Caco-2 (cell line): ENCODE measurements at regions of chr10 and their contacts with region 1.

Region 1: GRCh38 chr10:17387861-17388508 is 66.4 kb downstream of the ST8SIA6 start:
- DNase-seq: peak; percentile 92 to 96
- H3K4me3 ChIP-seq: no peak overlapping the region; the same call in 1 of the 2 replicates
- H3K4me3 Mint-ChIP-seq: peak overlapping the region; percentile 57
- H3K27ac Mint-ChIP-seq: peak overlapping the region; percentile 48
- H3K4me1 ChIP-seq: peaks cover 34% of the 10 kb centered on the region
- H3K4me1 Mint-ChIP-seq: peaks cover 25% of the 10 kb centered on the region
- H3K27me3 ChIP-seq: no peaks in the 10 kb centered on the region
- H3K27me3 Mint-ChIP-seq: no peaks in the 10 kb centered on the region
- CTCF ChIP-seq: no peak

Region 2: DNA sequence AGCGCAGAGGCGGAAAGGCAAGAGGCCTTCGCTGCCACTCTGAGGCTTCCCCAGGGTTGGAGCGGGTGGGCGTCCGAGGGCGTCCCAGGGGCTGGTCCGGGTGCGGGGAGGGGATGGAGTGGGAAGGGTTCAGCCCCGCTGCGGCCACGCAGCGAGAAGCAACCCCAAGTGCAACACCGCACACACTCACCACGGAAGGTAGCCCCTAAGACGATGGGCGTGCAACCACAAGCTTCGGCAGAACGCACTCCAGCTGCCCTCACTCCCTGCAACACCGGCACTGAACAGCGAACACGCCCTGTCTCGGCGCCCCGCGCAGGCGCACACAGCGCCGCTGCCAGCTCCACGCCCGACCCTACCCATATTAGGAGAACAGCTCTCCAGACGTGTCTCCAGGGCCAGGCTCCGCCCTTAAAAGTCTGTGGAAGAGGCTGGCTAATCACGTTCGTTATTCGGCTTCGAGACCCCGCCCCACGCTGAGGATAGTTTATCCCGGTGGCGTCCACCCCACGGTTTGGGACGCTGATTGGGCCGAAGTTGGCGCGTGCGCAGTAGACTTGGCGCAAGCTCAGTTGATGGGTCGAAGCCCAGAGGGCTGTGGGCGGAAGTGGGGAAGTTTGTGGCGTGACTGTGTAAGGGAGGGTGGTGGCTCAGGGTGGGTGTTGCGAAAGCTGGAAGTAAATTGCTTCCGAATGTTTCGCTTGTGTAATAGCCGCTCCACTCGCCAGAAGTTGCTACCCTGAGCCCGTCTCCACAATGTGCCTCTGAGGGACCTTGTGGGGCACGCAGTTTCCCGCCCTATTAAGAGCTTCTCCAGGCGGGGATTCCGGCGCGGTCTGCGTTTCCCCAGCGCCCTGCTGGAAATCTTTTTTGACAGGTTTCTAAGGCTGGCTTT is 570.6 kb before region 1 on chr10 and contains the start of gene RSU1:
- CTCF ChIA-PET with region 1: no interaction called
- POLR2A ChIA-PET with region 1: no interaction called
- intact Hi-C with region 1: loop called (anchors 5 kb)
- DNase-seq: peak; percentile 100
- H3K4me3 ChIP-seq: peak within 1 kb of the TSS; percentile 84
- H3K4me3 Mint-ChIP-seq: peak within 1 kb of the TSS; percentile 97
- H3K27ac Mint-ChIP-seq: peak within 1 kb of the TSS; percentile 89
- H3K4me1 ChIP-seq: peaks cover 4% of the 10 kb centered on the region
- H3K4me1 Mint-ChIP-seq: peaks cover 20% of the 10 kb centered on the region
- H3K27me3 ChIP-seq: no peaks in the 10 kb centered on the region
- H3K27me3 Mint-ChIP-seq: no peaks in the 10 kb centered on the region
- CTCF ChIP-seq: no peak
- total RNA-seq, gene RSU1: 62.0 and 66.6 TPM in 2 replicates

Region 3: GRCh38 chr10:17290226-17290625 is 97.8 kb before region 1 on chr10:
- CTCF ChIA-PET with region 1: no interaction called
- POLR2A ChIA-PET with region 1: no interaction called
- intact Hi-C with region 1: loop called (anchors 1 kb)
- DNase-seq: peak in 1 of 2 experiments; percentile 63
- H3K4me3 ChIP-seq: no peak overlapping the region
- H3K4me3 Mint-ChIP-seq: no peak overlapping the region
- H3K27ac Mint-ChIP-seq: no peak overlapping the region
- H3K4me1 ChIP-seq: no peaks in the 10 kb centered on the region
- H3K4me1 Mint-ChIP-seq: peaks cover 6% of the 10 kb centered on the region
- H3K27me3 ChIP-seq: no peaks in the 10 kb centered on the region
- H3K27me3 Mint-ChIP-seq: peaks cover 14% of the 10 kb centered on the region
- CTCF ChIP-seq: peak; percentile 60 to 80

Region 4: GRCh38 chr10:17356820-17357219 is 31.2 kb before region 1 on chr10:
- CTCF ChIA-PET with region 1: no interaction called
- POLR2A ChIA-PET with region 1: no interaction called
- intact Hi-C with region 1: loop called (anchors 1 kb)
- DNase-seq: no peak
- H3K4me3 ChIP-seq: no peak overlapping the region
- H3K4me3 Mint-ChIP-seq: no peak overlapping the region
- H3K27ac Mint-ChIP-seq: no peak overlapping the region
- H3K4me1 ChIP-seq: peaks cover 14% of the 10 kb centered on the region
- H3K4me1 Mint-ChIP-seq: peaks cover 20% of the 10 kb centered on the region
- H3K27me3 ChIP-seq: no peaks in the 10 kb centered on the region
- H3K27me3 Mint-ChIP-seq: peaks cover 3% of the 10 kb centered on the region
- CTCF ChIP-seq: no peak

Region 5: GRCh38 chr10:17409170-17409733 is 21.3 kb after region 1 on chr10:
- CTCF ChIA-PET with region 1: no interaction called
- POLR2A ChIA-PET with region 1: no interaction called
- intact Hi-C with region 1: loop called (anchors 1 kb)
- DNase-seq: no peak
- H3K4me3 ChIP-seq: no peak overlapping the region
- H3K4me3 Mint-ChIP-seq: no peak overlapping the region
- H3K27ac Mint-ChIP-seq: no peak overlapping the region
- H3K4me1 ChIP-seq: peaks cover 14% of the 10 kb centered on the region
- H3K4me1 Mint-ChIP-seq: peaks cover 9% of the 10 kb centered on the region
- H3K27me3 ChIP-seq: no peaks in the 10 kb centered on the region
- H3K27me3 Mint-ChIP-seq: no peaks in the 10 kb centered on the region
- CTCF ChIP-seq: peak; percentile 16 to 45

Region 6: DNA sequence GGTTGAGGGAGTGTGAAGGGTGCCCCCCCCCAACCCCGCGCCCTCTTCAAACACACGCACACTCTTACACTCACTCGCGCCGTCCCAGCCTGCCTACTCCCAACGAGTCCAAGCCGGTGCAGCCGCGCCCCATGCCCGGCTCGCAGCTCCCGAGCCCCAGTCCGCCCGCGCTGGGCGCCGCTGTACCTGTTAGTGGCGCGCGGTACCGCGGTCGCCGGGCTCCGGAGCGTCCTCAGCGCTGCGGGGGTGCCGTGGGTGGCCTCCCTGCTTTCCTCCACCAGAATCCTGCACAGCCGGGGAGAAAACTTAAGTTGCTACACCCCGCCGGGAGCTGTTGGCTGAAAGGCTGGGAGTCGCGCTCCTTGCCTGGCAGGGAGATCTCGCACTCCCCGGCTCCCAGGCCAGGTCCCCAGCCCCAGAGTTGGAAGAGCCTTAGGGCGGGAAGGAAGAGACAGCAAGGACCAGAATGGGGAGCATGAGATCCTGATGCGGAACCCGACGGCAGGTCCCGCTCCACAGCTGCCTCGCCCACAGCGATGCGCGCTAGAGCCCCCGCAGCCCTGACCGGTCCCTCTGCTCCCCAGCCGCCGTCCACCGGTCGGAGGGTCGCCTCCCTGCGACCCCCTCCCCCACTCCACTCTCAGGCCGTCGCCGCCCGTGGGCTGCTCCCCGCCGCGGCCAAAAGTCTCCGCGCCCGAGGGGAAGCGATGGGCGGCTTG is 65.5 kb after region 1 on chr10:
- CTCF ChIA-PET with region 1: no interaction called
- POLR2A ChIA-PET with region 1: no interaction called
- intact Hi-C with region 1: loop called (anchors 2 kb)
- DNase-seq: peak; percentile 50 to 55
- H3K4me3 ChIP-seq: peak overlapping the region; percentile 46
- H3K4me3 Mint-ChIP-seq: peak overlapping the region; percentile 79
- H3K27ac Mint-ChIP-seq: no peak overlapping the region
- H3K4me1 ChIP-seq: peaks cover 9% of the 10 kb centered on the region; the same call in 1 of the 2 replicates
- H3K4me1 Mint-ChIP-seq: no peaks in the 10 kb centered on the region
- H3K27me3 ChIP-seq: peaks cover 4% of the 10 kb centered on the region; the same call in 1 of the 2 replicates
- H3K27me3 Mint-ChIP-seq: peaks cover 27% of the 10 kb centered on the region
- CTCF ChIP-seq: no peak